ENCODE measurements at regions of chr1 and their contacts with region 1.

Region 1: DNA sequence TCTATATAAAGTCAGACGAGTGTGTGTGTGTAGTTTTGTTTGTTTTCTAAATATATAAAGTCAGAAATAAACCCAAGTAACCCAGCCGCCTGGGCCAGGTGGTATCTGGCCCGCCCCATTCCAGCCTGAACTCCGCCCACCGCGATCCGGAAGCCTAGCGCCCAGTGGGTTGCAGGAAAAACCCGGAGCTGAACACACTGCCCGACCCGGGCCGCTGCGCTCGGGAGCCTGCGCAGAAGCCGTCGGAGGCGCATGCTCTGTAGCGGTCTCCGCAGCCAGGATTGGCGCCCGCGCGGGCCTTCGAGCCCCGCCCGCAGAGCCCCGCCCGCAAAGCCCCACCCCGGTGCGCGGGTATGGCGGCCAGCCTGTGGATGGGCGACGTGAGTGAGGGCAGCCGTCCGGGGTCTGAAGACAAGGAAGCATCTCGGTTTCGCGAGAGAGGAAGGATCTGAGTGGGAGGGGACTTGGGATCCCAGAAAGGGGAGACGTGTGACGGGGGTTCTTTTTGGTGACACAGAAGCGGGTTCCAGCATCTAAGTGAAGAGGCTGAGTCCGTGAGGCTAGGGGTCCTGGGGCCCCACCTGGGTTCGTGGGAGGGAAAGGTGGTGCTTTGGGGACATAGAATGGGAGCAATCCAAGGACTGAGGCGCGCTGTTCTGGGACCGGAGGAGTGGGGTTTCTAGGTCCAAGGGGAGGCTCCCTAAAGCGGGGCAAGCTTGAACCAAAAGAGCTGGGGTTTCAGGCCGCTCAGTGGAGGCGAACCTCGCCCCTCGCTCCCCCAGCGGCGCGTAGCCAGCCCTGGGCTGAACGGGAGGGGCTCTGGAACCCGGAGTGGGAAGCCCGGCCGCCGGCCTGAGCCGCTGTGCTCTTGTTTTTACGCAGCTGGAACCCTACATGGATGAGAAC is at the start of gene TRNAU1AP:
- DNase-seq: peak; percentile 97
- ATAC-seq: peak; percentile 98 to 99 (median 99)
- H3K4me3 ChIP-seq: peak within 1 kb of the TSS; percentile 66 to 96 (median 88)
- H3K27ac ChIP-seq: peak within 1 kb of the TSS; percentile 43 to 92 (median 86)
- H3K4me1 ChIP-seq: peaks cover 0 to 25% (median 10%) of the 10 kb centered on the region in 9 donors
- H3K27me3 ChIP-seq: no peaks in the 10 kb centered on the region
- CTCF ChIP-seq: peak in 1 of 9 donors; percentile 3
- total RNA-seq, gene TRNAU1AP: 13.1 to 21.2 (median 15.2) TPM

Region 2: GRCh38 chr1:28369371-28370238 is 183.4 kb before region 1 on chr1 and contains the start of gene PHACTR4:
- intact Hi-C with region 1: loop called in 1 of 10 experiments (anchors 1 kb)
- DNase-seq: peak; percentile 92 to 93
- ATAC-seq: peak; percentile 98 to 99 (median 99)
- H3K4me3 ChIP-seq: peak within 1 kb of the TSS; percentile 51 to 98 (median 80)
- H3K27ac ChIP-seq: peak within 1 kb of the TSS; percentile 76 to 98 (median 93)
- H3K4me1 ChIP-seq: peaks cover 0 to 32% (median 18%) of the 10 kb centered on the region in 9 donors
- H3K27me3 ChIP-seq: no peaks in the 10 kb centered on the region
- CTCF ChIP-seq: peak in 1 of 9 donors; percentile 12
- total RNA-seq, gene PHACTR4: 14.0 to 24.9 (median 18.5) TPM

Region 3: GRCh38 chr1:28505406-28506187 is 47.4 kb before region 1 on chr1 and contains the start of gene RCC1:
- intact Hi-C with region 1: loop called in 2 of 10 experiments (anchors 2 to 5 kb)
- DNase-seq: peak; percentile 93 to 98
- ATAC-seq: peak; percentile 96 to 99 (median 98)
- H3K4me3 ChIP-seq: peak within 1 kb of the TSS; percentile 54 to 90 (median 78)
- H3K27ac ChIP-seq: peak within 1 kb of the TSS; percentile 21 to 95 (median 87)
- H3K4me1 ChIP-seq: peaks cover 9 to 48% (median 42%) of the 10 kb centered on the region in 9 donors
- H3K27me3 ChIP-seq: no peaks in the 10 kb centered on the region
- CTCF ChIP-seq: no peak
- total RNA-seq, gene RCC1: 2.3 to 17.8 (median 3.9) TPM

Region 4: GRCh38 chr1:28581536-28582247 is 28.7 kb after region 1 on chr1:
- intact Hi-C with region 1: loop called in 2 of 10 experiments (anchors 2 kb)
- DNase-seq: peak; percentile 94 to 95
- ATAC-seq: peak; percentile 98 to 99 (median 99)
- H3K4me3 ChIP-seq: peak overlapping the region; percentile 73 to 98 (median 90)
- H3K27ac ChIP-seq: peak overlapping the region; percentile 72 to 94 (median 87)
- H3K4me1 ChIP-seq: peaks cover 0 to 48% (median 26%) of the 10 kb centered on the region in 9 donors
- H3K27me3 ChIP-seq: no peaks in the 10 kb centered on the region
- CTCF ChIP-seq: peak in 2 of 9 donors; percentile 0 to 29